Activated naive CD4-positive, alpha-beta T cell treated with anti-CD3 and anti-CD28 coated beads, Interleukin-2, amount 10 ng/mL, durations not matched to agents 7 days and 5 days (primary cell): ENCODE measurements at regions of chr7 and their contacts with region 1.

Region 1: DNA sequence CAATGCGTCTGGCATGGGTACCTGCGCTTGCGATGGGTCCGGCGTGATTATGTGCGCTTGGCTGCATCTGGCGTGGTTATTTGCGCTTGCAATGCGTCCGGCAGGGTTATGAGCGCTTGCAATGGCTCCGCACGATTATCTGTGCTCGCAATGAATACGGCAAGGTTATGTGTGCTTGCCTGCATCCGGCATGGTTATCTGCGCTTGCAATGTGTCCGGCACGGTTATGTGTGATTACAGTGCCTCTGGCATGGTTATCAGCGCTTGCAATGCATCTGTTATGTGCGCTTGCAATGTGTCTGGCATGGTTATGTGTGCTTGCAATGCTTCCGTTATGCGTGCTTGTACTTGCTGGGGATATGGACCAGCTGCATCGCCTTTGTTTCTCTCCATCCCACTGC is 37.7 kb downstream of the RBAK start:
- DNase-seq: no peak
- H3K4me3 Mint-ChIP-seq: no peak overlapping the region
- H3K27ac Mint-ChIP-seq: no peak overlapping the region
- H3K4me1 Mint-ChIP-seq: peaks cover 2% of the 10 kb centered on the region
- H3K27me3 Mint-ChIP-seq: peaks cover 60% of the 10 kb centered on the region

Region 2: GRCh38 chr7:4830176-4830575 is 253.1 kb before region 1 on chr7:
- CTCF ChIA-PET with region 1: interaction called, 33 read pairs
- DNase-seq: peak; percentile 73
- H3K4me3 Mint-ChIP-seq: no peak overlapping the region
- H3K27ac Mint-ChIP-seq: no peak overlapping the region
- H3K4me1 Mint-ChIP-seq: peaks cover 2% of the 10 kb centered on the region
- H3K27me3 Mint-ChIP-seq: no peaks in the 10 kb centered on the region

Region 3: DNA sequence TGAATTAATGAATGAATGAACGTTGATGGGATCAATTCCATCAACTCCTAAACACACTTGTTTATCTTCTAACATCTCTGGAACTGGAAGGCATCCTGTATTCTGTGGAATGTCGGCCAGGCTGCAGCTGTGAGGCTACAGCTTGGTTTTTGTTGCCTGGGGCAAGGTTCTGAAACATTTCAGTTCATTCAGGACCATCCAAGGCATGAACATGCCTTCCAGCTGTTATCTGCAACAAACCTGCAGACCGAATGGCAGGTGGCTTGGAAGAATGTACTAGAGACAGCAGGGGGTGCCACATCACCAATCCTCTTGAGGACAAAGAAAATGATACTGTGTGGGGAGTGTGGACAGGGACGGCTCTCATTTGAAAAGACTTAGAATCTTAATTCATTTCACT is 233.9 kb before region 1 on chr7:
- CTCF ChIA-PET with region 1: interaction called, 10 read pairs
- DNase-seq: peak; percentile 50
- H3K4me3 Mint-ChIP-seq: no peak overlapping the region
- H3K27ac Mint-ChIP-seq: no peak overlapping the region
- H3K4me1 Mint-ChIP-seq: peaks cover 5% of the 10 kb centered on the region
- H3K27me3 Mint-ChIP-seq: peaks cover 21% of the 10 kb centered on the region

Region 4: GRCh38 chr7:4973728-4974198 is 109.5 kb before region 1 on chr7:
- CTCF ChIA-PET with region 1: interaction called, 60 read pairs
- DNase-seq: peak; percentile 94
- H3K4me3 Mint-ChIP-seq: peak overlapping the region; percentile 99
- H3K27ac Mint-ChIP-seq: peak overlapping the region; percentile 97
- H3K4me1 Mint-ChIP-seq: peaks cover 27% of the 10 kb centered on the region
- H3K27me3 Mint-ChIP-seq: peaks cover 3% of the 10 kb centered on the region

Region 5: GRCh38 chr7:5200561-5201270 is 117.4 kb after region 1 on chr7:
- CTCF ChIA-PET with region 1: no interaction called
- DNase-seq: no peak
- H3K4me3 Mint-ChIP-seq: no peak overlapping the region
- H3K27ac Mint-ChIP-seq: no peak overlapping the region
- H3K4me1 Mint-ChIP-seq: no peaks in the 10 kb centered on the region
- H3K27me3 Mint-ChIP-seq: no peaks in the 10 kb centered on the region